ENCODE measurements at regions of chr17 and their contacts with region 1.

Region 1: GRCh38 chr17:72539981-72540897 is 419.4 kb downstream of the SOX9 start:
- DNase-seq: peak; percentile 53 to 85 (median 58)
- H3K4me3 ChIP-seq: no peak overlapping the region
- H3K27ac ChIP-seq: no peak overlapping the region
- H3K4me1 ChIP-seq: peaks cover 2% of the 10 kb centered on the region
- H3K27me3 ChIP-seq: no peaks in the 10 kb centered on the region
- CTCF ChIP-seq: peak; percentile 47 to 90 (median 76)
- EP300 ChIP-seq: no peak
- POLR2A ChIP-seq: no peak

Region 2: DNA sequence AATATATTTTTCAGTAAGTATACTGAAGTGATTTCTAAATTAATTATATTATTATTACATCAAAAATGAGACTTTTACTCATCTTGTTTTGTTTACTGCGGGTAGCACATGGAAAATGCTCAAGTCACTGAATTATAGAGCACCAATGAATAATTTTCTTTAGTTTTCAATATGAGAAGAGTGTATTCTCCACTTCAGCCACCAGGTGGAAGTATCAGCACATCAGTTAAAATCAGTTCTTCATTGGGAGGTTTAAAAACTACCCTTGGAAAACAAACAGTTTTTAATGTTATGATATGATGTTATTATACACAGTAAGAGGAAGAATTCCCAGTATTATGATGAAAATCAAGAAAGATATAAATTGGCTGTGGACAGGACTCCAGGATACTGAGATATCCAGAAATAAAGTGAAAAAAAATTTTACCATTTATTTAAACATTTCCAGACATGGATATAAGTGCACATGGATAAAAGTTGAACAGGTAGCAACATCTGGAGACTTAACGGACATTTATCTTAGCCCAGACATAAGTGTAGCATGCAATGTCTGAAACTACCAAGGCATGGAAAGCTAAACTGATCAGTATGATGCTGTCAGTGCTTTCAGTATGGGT is 1903.6 kb before region 1 on chr17:
- intact Hi-C with region 1: loop called in 3 of 4 experiments (anchors 5 to 10 kb)
- DNase-seq: no peak
- H3K4me3 ChIP-seq: no peak overlapping the region
- H3K27ac ChIP-seq: no peak overlapping the region
- H3K4me1 ChIP-seq: no peaks in the 10 kb centered on the region
- H3K27me3 ChIP-seq: no peaks in the 10 kb centered on the region
- CTCF ChIP-seq: peak; percentile 28 to 33 (median 32)
- EP300 ChIP-seq: no peak
- POLR2A ChIP-seq: no peak

Region 3: DNA sequence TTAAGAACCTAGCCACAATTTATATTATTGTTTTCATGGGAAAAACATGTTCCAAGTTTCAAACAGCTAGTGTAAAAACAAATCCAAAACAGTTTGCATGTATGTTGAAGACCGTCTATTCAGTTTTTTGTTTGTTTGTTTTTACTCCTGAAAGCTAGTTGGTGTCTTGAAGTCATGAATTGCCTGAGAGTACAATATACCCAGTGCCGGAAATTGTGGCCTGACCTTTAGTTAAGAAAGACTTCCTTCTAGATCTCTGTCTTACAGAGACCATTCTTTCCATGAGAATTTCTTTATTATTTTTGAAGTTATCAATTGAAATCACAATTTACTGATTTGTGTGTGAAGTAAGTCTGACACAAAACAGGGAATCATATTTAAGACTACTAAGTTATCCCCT is 1896.1 kb before region 1 on chr17:
- intact Hi-C with region 1: loop called in 3 of 4 experiments (anchors 5 to 10 kb)
- DNase-seq: no peak
- H3K4me3 ChIP-seq: no peak overlapping the region
- H3K27ac ChIP-seq: no peak overlapping the region
- H3K4me1 ChIP-seq: no peaks in the 10 kb centered on the region
- H3K27me3 ChIP-seq: no peaks in the 10 kb centered on the region
- CTCF ChIP-seq: no peak
- EP300 ChIP-seq: no peak
- POLR2A ChIP-seq: no peak